ENCODE measurements at regions of chrX and their contacts with region 1.

Region 1: GRCh38 chrX:20066968-20067708 is 49.6 kb downstream of the MAP7D2 start:
- DNase-seq: no peak
- H3K4me3 ChIP-seq: no peak overlapping the region
- CTCF ChIP-seq: no peak
- POLR2A ChIP-seq: no peak

Region 2: GRCh38 chrX:19904778-19905367 is 162.3 kb before region 1 on chrX:
- intact Hi-C with region 1: loop called (anchors 10 kb)
- DNase-seq: no peak
- H3K4me3 ChIP-seq: no peak overlapping the region
- CTCF ChIP-seq: no peak
- POLR2A ChIP-seq: no peak

Region 3: GRCh38 chrX:20863649-20864048 is 796.5 kb after region 1 on chrX:
- intact Hi-C with region 1: no loop called
- DNase-seq: no peak
- H3K4me3 ChIP-seq: no peak overlapping the region
- CTCF ChIP-seq: no peak
- POLR2A ChIP-seq: no peak